Esophagus muscularis mucosa (tissue), 4 donors: ENCODE measurements at regions of chr1 and their contacts with region 1.

Region 1: GRCh38 chr1:182095965-182096364 is 34.5 kb upstream of the ZNF648 start:
- DNase-seq: no peak
- H3K4me3 ChIP-seq: no peak overlapping the region
- H3K27ac ChIP-seq: no peak overlapping the region
- H3K4me1 ChIP-seq: peaks cover 0 to 12% (median 8%) of the 10 kb centered on the region in 4 donors
- H3K27me3 ChIP-seq: no peaks in the 10 kb centered on the region
- CTCF ChIP-seq: no peak
- EP300 ChIP-seq: no peak
- POLR2A ChIP-seq: no peak

Region 2: DNA sequence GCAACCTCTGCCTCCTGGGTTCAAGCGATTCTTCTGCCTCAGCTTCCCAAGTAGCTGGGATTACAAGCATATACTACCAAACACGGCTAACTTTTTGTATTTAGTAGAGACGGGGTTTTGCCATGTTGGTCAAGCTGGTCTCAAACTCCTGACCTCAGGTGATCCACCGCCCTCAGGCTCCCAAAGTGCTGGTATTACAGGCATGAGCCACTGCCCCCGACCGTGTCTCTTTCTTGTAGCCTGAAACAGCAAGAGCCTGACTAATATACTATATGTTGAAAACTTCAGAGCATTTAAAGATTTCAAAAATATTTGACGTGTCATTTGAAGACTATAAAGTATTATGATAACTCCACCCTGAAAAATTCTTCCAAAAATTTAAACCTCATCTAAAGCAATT is 37.2 kb after region 1 on chr1:
- intact Hi-C with region 1: loop called (anchors 5 kb)
- DNase-seq: no peak
- H3K4me3 ChIP-seq: no peak overlapping the region
- H3K27ac ChIP-seq: no peak overlapping the region
- H3K4me1 ChIP-seq: no peaks in the 10 kb centered on the region
- H3K27me3 ChIP-seq: no peaks in the 10 kb centered on the region
- CTCF ChIP-seq: no peak
- EP300 ChIP-seq: no peak
- POLR2A ChIP-seq: no peak